A673 (cell line): ENCODE measurements at regions of chr12 and their contacts with region 1.

Region 1: GRCh38 chr12:89160716-89161123 is 191.6 kb downstream of the DUSP6 start:
- DNase-seq: peak; percentile 93
- H3K4me3 ChIP-seq: no peak overlapping the region
- H3K27ac ChIP-seq: peak overlapping the region; percentile 52
- H3K4me1 ChIP-seq: peaks cover 79% of the 10 kb centered on the region
- H3K27me3 ChIP-seq: no peaks in the 10 kb centered on the region
- CTCF ChIP-seq: no peak

Region 2: DNA sequence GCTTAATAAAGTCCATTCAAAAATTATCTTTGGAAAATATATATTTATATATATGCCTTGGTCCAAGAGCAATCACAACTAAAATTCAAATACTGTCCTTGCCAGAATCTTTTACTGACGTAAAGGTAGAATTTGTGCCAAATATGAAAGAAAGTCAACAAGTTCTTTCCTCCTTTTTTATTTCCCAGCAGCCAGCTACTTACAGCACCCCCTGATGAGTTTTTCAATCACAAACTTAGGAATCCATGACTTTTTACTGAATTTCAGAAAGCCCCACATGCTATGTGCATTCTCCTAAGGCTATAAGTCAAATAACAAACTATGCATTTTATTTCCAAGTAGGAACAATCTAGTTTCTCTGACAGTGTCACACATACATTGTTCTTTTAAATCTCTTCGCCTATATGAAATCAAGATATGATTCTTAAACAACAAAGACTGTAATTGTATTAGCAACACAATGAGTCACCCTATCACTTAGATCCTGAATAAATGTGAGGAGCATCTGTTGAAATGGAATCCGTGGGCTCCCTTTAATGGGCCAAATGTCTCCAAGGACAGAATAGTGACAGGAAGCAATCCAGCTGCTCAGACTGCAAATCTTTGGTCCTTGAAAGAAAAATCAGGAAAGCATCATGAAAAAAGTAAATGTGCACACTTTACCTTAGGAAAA is 79.8 kb before region 1 on chr12:
- CTCF ChIA-PET with region 1: no interaction called
- POLR2A ChIA-PET with region 1: no interaction called
- intact Hi-C with region 1: loop called (anchors 5 kb)
- DNase-seq: peak; percentile 97
- H3K4me3 ChIP-seq: no peak overlapping the region
- H3K27ac ChIP-seq: peak overlapping the region; percentile 77
- H3K4me1 ChIP-seq: peaks cover 69% of the 10 kb centered on the region
- H3K27me3 ChIP-seq: no peaks in the 10 kb centered on the region
- CTCF ChIP-seq: no peak

Region 3: GRCh38 chr12:89278169-89278568 is 117.4 kb after region 1 on chr12:
- CTCF ChIA-PET with region 1: no interaction called
- POLR2A ChIA-PET with region 1: no interaction called
- intact Hi-C with region 1: loop called (anchors 1 kb)
- DNase-seq: no peak
- H3K4me3 ChIP-seq: no peak overlapping the region
- H3K27ac ChIP-seq: peak overlapping the region; percentile 84
- H3K4me1 ChIP-seq: peaks cover 58% of the 10 kb centered on the region
- H3K27me3 ChIP-seq: no peaks in the 10 kb centered on the region
- CTCF ChIP-seq: peak; percentile 45

Region 4: GRCh38 chr12:89352492-89353187 is 191.9 kb after region 1 on chr12 and contains the start of gene DUSP6:
- CTCF ChIA-PET with region 1: no interaction called
- POLR2A ChIA-PET with region 1: no interaction called
- intact Hi-C with region 1: loop called (anchors 2 kb)
- DNase-seq: peak; percentile 100
- H3K4me3 ChIP-seq: peak within 1 kb of the TSS; percentile 68
- H3K27ac ChIP-seq: peak within 1 kb of the TSS; percentile 99
- H3K4me1 ChIP-seq: peaks cover 29% of the 10 kb centered on the region
- H3K27me3 ChIP-seq: no peaks in the 10 kb centered on the region
- CTCF ChIP-seq: no peak
- total RNA-seq, gene DUSP6: 207 and 226 TPM in 2 replicates

Region 5: GRCh38 chr12:89524541-89525285 is 364.0 kb after region 1 on chr12 and contains the start of gene GALNT4:
- CTCF ChIA-PET with region 1: no interaction called
- POLR2A ChIA-PET with region 1: no interaction called
- intact Hi-C with region 1: loop called (anchors 5 kb)
- DNase-seq: peak; percentile 94
- H3K4me3 ChIP-seq: peak within 1 kb of the TSS; percentile 82
- H3K27ac ChIP-seq: peak within 1 kb of the TSS; percentile 86
- H3K4me1 ChIP-seq: peaks cover 35% of the 10 kb centered on the region
- H3K27me3 ChIP-seq: no peaks in the 10 kb centered on the region
- CTCF ChIP-seq: peak; percentile 83
- total RNA-seq, gene GALNT4: 13.2 and 14.3 TPM in 2 replicates